ENCODE measurements at regions of chr14 and their contacts with region 1.

Region 1: DNA sequence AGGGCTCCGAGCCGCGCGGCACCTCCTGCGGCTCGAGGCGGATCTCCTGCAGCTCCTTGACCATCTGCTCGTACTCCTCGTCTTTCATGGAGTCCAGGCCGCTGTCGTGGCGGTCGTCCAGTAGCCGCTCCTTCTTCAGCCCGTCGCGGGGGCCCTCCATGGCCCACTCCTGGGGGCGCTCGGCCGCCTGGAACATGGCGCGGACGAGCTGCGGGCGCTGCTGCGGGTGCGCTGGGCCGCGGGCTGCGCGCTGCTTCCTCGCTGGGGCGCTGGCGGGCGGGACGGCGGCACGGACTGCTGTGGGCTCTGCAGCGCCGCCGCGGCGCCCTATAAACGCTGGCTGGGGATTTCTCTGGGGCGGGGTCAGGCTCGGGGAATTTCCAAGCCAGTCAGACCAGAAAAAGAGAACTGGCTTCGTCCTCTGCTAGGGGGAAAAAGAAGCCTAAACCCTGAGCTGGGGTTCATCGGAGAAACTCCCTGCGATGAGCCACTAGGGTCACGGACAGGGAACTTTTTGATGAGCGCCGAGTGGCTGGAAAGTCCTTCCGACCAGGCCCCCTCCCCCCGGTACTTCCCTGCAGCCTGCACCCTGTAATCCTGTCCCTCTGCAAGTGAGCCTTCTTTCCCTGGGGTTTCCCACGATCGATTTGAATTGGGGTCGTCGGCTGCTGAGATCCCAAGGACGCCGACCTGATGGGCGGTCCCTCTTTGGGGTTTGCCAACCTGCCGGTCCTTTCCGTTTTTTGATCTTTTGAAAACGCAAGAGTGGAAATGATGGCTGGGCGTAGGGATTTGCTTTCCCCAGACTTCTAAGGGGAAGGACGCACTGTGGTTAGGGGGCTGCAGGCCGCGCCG is at the start of gene NFKBIA:
- DNase-seq: peak; percentile 93
- ATAC-seq: peak; percentile 78
- H3K4me3 ChIP-seq: peak within 1 kb of the TSS; percentile 88 to 99 (median 99)
- H3K27ac ChIP-seq: peak within 1 kb of the TSS; percentile 97
- H3K4me1 ChIP-seq: peaks cover 66% of the 10 kb centered on the region
- H3K27me3 ChIP-seq: no peaks in the 10 kb centered on the region; a peak in 2 of 5 replicates
- CTCF ChIP-seq: peak; percentile 75
- EP300 ChIP-seq: peak in 1 of 2 experiments; percentile 54; a peak in 3 of 4 replicates
- POLR2A ChIP-seq: peak in 1 of 2 experiments; percentile 97; a peak in 2 of 4 replicates
- RAD21 ChIP-seq: peak; percentile 96
- total RNA-seq, gene NFKBIA: 232 and 319 TPM in 2 replicates

Region 2: DNA sequence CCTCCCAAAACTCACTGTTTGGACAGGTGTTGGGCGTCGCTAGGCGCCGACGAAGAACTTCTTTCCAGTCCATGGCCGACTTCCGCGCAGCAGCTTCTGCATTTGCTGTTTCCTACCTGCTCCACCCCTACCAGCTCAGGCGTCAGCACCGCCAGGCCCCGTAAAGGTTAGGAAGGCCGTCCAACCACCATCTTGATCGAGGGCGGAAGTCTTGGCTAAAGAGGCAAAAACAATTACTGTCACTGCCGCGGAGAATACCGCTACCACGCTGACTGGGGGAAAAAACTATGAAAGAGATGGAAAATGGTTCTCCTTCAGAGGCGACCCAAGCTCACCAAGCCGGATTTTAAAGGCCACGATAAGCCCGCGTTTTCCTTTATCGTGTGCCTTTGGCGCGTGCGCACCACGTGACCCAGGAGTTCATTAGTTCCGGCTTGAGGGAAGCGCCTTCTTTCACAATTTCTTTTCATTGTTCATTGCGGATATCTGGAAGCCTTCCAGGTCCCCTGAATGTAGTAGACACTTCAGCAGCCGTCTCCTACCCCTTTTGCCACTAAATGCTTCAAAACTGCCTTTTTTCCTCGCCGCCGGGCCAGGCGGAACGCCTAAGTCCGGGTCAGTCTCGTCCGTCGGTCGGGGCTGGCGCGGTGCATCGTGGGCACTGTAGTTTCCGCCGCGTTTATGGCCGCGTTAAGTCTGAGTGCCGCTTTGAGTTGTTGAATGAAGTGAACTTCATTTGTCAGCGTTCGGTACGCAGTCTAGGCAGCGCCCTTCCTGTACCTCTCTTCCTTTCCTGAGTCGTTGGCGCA is 282.6 kb before region 1 on chr14 and contains the starts of genes PPP2R3C and PRORP:
- CTCF ChIA-PET with region 1: no interaction called
- POLR2A ChIA-PET with region 1: interaction called, 78 read pairs
- in situ Hi-C with region 1: loop called (anchors 5 kb)
- intact Hi-C with region 1: no loop called
- DNase-seq: peak; percentile 98
- ATAC-seq: peak; percentile 94
- H3K4me3 ChIP-seq: peak within 1 kb of the TSS; percentile 82 to 97 (median 86)
- H3K27ac ChIP-seq: peak within 1 kb of the TSS; percentile 91
- H3K4me1 ChIP-seq: peaks cover 67% of the 10 kb centered on the region
- H3K27me3 ChIP-seq: peaks cover 0 to 5% of the 10 kb centered on the region in 2 experiments; a peak in 2 of 5 replicates
- CTCF ChIP-seq: peak; percentile 37
- EP300 ChIP-seq: peak; percentile 47 to 82
- POLR2A ChIP-seq: peak; percentile 90 to 96
- RAD21 ChIP-seq: no peak
- total RNA-seq, gene PPP2R3C: 102 and 140 TPM in 2 replicates
- total RNA-seq, gene PRORP: 88.7 and 131 TPM in 2 replicates

Region 3: GRCh38 chr14:35215110-35215876 is 189.4 kb before region 1 on chr14:
- CTCF ChIA-PET with region 1: interaction called, 7 read pairs
- POLR2A ChIA-PET with region 1: interaction called, 36 read pairs
- in situ Hi-C with region 1: loop called (anchors 5 kb)
- intact Hi-C with region 1: loop called (anchors 1 kb)
- DNase-seq: peak; percentile 57
- ATAC-seq: no peak; the same call in 2 of the 3 replicates
- H3K4me3 ChIP-seq: no peak overlapping the region
- H3K27ac ChIP-seq: no peak overlapping the region
- H3K4me1 ChIP-seq: peaks cover 25% of the 10 kb centered on the region
- H3K27me3 ChIP-seq: no peaks in the 10 kb centered on the region
- CTCF ChIP-seq: peak; percentile 68
- EP300 ChIP-seq: no peak
- POLR2A ChIP-seq: no peak
- RAD21 ChIP-seq: peak; percentile 46; the same call in 1 of the 2 replicates

Region 4: DNA sequence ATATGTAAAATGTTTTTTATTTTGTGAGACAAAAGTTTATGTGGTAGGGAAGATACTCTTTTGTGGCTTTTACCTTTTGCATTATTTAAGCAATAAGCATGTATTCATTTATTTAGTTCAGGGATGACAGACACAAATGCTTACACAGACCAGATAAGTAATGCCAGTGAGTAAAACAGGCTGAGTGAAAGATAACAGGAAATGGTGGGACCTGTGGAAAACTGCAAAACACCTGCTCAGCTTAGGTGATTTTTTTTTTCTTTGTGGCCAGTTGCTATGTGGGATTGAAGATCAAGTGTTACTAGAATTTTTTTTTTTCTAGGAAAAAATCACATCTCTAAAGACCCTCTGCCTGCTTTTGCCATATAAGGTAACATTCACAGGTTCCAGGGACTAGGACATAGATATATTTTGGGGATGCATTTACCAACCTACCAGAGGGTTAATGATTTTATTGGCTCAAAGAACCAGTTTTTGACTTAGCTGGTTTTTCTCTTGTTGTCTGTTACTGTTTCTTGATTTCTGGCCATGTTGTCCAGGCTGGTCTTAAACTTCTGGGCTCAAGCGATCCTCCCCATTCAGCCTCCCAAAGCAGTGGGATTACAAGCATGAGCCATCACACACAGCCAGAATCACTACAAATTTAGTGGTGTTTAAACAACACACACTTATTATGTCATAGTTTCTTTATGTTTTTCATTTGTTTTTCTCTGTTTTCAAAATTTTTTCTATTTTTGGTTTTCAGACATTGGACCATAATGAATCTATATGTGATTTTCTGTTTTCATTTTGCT is 102.7 kb before region 1 on chr14:
- CTCF ChIA-PET with region 1: no interaction called
- POLR2A ChIA-PET with region 1: interaction called, 13 read pairs
- in situ Hi-C with region 1: no loop called
- intact Hi-C with region 1: no loop called
- DNase-seq: no peak
- ATAC-seq: no peak
- H3K4me3 ChIP-seq: no peak overlapping the region
- H3K27ac ChIP-seq: no peak overlapping the region
- H3K4me1 ChIP-seq: peaks cover 25% of the 10 kb centered on the region
- H3K27me3 ChIP-seq: no peaks in the 10 kb centered on the region
- CTCF ChIP-seq: no peak
- EP300 ChIP-seq: no peak
- POLR2A ChIP-seq: no peak
- RAD21 ChIP-seq: no peak

Region 5: DNA sequence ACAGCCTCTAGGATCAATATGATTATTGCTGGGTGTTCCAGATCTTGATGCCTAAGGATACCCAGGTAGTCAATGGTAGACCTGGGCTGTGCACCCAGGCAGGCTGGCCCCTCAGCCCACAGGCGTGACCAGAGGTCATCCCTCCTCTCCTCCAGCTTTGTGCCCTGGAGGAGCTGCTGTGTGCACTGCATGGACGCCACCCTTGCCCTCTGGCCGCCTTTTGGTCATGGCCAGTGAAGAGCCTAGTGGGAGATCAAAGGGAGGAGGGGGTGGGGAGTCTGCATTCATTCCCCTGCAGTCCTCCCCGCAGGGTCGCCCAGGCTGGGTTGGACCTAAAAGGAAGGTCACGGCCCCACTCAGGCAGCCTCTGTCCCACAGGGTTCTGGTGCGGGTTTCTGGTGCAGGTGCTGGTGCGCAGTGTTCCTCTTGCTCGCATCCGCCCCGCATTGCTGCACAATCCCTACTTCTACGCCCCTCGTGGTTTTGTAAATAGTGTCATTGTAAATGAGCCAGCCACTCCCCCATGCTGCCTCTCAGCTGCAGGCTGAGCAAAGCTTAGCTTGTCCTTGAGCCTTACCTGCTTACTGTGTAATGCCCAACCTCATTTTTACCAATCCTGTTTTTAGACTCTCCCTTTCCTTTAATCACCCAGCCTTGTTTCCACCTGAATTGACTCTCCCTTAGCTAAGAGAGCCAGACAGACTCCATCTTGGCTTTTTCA is 57.2 kb before region 1 on chr14:
- CTCF ChIA-PET with region 1: interaction called, 3 read pairs
- POLR2A ChIA-PET with region 1: interaction called, 473 read pairs
- in situ Hi-C with region 1: no loop called
- intact Hi-C with region 1: no loop called
- DNase-seq: peak; percentile 99
- ATAC-seq: peak; percentile 94
- H3K4me3 ChIP-seq: peak overlapping the region; percentile 12 to 69 (median 52)
- H3K27ac ChIP-seq: peak overlapping the region; percentile 72
- H3K4me1 ChIP-seq: peaks cover 75% of the 10 kb centered on the region
- H3K27me3 ChIP-seq: no peaks in the 10 kb centered on the region; a peak in 1 of 5 replicates
- CTCF ChIP-seq: peak; percentile 38
- EP300 ChIP-seq: peak; percentile 91 to 96
- POLR2A ChIP-seq: peak in 1 of 2 experiments; percentile 77; a peak in 2 of 4 replicates
- RAD21 ChIP-seq: peak; percentile 70

Region 6: GRCh38 chr14:35385042-35385839 is 19.4 kb before region 1 on chr14:
- CTCF ChIA-PET with region 1: no interaction called
- POLR2A ChIA-PET with region 1: interaction called, 211 read pairs
- in situ Hi-C with region 1: no loop called
- intact Hi-C with region 1: loop called (anchors 1 kb)
- DNase-seq: peak; percentile 85
- ATAC-seq: peak; percentile 83
- H3K4me3 ChIP-seq: peak overlapping the region; percentile 41 to 73 (median 44)
- H3K27ac ChIP-seq: peak overlapping the region; percentile 29
- H3K4me1 ChIP-seq: peaks cover 52% of the 10 kb centered on the region
- H3K27me3 ChIP-seq: no peaks in the 10 kb centered on the region
- CTCF ChIP-seq: peak; percentile 10; the same call in 1 of the 2 replicates
- EP300 ChIP-seq: peak; percentile 17 to 30; a peak in 2 of 4 replicates
- POLR2A ChIP-seq: peak in 1 of 2 experiments; percentile 59; a peak in 2 of 4 replicates
- RAD21 ChIP-seq: no peak